ENCODE measurements at regions of chr12 and their contacts with region 1.

Region 1: GRCh38 chr12:98418357-98419075 is 96.9 kb upstream of the TMPO start:
- DNase-seq: peak; percentile 90
- H3K4me3 ChIP-seq: peak overlapping the region in 1 of 3 experiments; percentile 7
- H3K27ac ChIP-seq: peak overlapping the region; percentile 32
- H3K4me1 ChIP-seq: peaks cover 19% of the 10 kb centered on the region
- H3K27me3 ChIP-seq: no peaks in the 10 kb centered on the region
- CTCF ChIP-seq: no peak

Region 2: GRCh38 chr12:98470469-98471082 is 52.1 kb after region 1 on chr12:
- CTCF ChIA-PET with region 1: no interaction called
- dilution Hi-C with region 1: loop called (anchors 5 kb)
- in situ Hi-C with region 1: no loop called
- intact Hi-C with region 1: no loop called
- DNase-seq: peak; percentile 72
- H3K4me3 ChIP-seq: no peak overlapping the region
- H3K27ac ChIP-seq: no peak overlapping the region
- H3K4me1 ChIP-seq: peaks cover 17% of the 10 kb centered on the region
- H3K27me3 ChIP-seq: no peaks in the 10 kb centered on the region
- CTCF ChIP-seq: no peak

Region 3: DNA sequence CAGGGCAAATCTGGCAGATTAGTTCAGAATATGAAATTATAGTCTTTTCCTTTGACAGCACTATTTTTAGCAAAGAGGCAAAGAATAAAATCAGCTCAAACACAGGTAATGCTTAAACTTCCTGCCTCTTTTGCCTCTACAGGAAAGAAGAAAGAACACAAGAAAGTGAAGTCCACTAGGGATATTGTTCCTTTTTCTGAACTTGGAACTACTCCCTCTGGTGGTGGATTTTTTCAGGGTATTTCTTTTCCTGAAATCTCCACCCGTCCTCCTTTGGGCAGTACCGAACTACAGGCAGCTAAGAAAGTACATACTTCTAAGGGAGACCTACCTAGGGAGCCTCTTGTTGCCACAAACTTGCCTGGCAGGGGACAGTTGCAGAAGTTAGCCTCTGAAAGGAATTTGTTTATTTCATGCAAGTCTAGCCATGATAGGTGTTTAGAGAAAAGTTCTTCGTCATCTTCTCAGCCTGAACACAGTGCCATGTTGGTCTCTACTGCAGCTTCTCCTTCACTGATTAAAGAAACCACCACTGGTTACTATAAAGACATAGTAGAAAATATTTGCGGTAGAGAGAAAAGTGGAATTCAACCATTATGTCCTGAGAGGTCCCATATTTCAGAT is 114.3 kb after region 1 on chr12:
- CTCF ChIA-PET with region 1: no interaction called
- dilution Hi-C with region 1: no loop called
- in situ Hi-C with region 1: loop called (anchors 10 kb)
- intact Hi-C with region 1: loop called (anchors 1 kb)
- DNase-seq: peak; percentile 55
- H3K4me3 ChIP-seq: no peak overlapping the region
- H3K27ac ChIP-seq: no peak overlapping the region
- H3K4me1 ChIP-seq: no peaks in the 10 kb centered on the region
- H3K27me3 ChIP-seq: no peaks in the 10 kb centered on the region
- CTCF ChIP-seq: peak; percentile 62 to 65

Measured in mammary epithelial cell (primary cell).